Activated CD8-positive, alpha-beta T cell treated with anti-CD3 and anti-CD28 coated beads for 36 hours (primary cell): ENCODE measurements at regions of chr2 and their contacts with region 1.

Region 1: DNA sequence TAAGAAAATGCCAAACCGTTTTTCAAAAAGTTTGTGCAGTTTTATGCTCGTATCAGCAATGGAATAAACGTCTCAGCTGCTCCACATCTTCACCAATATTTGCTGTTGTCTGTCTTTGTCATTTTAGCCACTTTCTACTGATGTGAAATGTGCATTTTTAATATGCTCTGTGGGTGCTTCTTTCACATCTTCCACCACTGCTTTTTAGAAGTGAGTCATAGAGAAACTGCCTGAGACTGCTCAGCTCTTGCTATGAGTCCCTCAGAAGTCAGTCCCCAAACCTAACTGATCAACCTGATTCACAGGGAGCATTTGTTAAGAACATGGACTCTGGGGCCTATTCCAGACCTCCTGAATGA is 41.0 kb upstream of the EPC2 start:
- DNase-seq: peak; percentile 59
- ATAC-seq: peak; percentile 91
- H3K4me3 Mint-ChIP-seq: peak overlapping the region; percentile 42
- H3K27ac Mint-ChIP-seq: peak overlapping the region; percentile 96
- H3K4me1 Mint-ChIP-seq: peaks cover 17% of the 10 kb centered on the region
- H3K27me3 Mint-ChIP-seq: peaks cover 3% of the 10 kb centered on the region
- CTCF ChIP-seq: no peak

Region 2: GRCh38 chr2:147006736-147007141 is 1596.8 kb before region 1 on chr2:
- CTCF ChIA-PET with region 1: no interaction called
- POLR2A ChIA-PET with region 1: no interaction called
- intact Hi-C with region 1: no loop called
- DNase-seq: no peak
- ATAC-seq: no peak
- H3K4me3 Mint-ChIP-seq: no peak overlapping the region
- H3K27ac Mint-ChIP-seq: no peak overlapping the region
- H3K4me1 Mint-ChIP-seq: no peaks in the 10 kb centered on the region
- H3K27me3 Mint-ChIP-seq: no peaks in the 10 kb centered on the region
- CTCF ChIP-seq: no peak

Region 3: GRCh38 chr2:148130581-148130980 is 473.0 kb before region 1 on chr2:
- CTCF ChIA-PET with region 1: no interaction called
- POLR2A ChIA-PET with region 1: no interaction called
- intact Hi-C with region 1: no loop called
- DNase-seq: no peak
- ATAC-seq: no peak
- H3K4me3 Mint-ChIP-seq: no peak overlapping the region
- H3K27ac Mint-ChIP-seq: no peak overlapping the region
- H3K4me1 Mint-ChIP-seq: peaks cover 4% of the 10 kb centered on the region
- H3K27me3 Mint-ChIP-seq: no peaks in the 10 kb centered on the region
- CTCF ChIP-seq: no peak

Region 4: GRCh38 chr2:148627224-148627623 is 23.7 kb after region 1 on chr2:
- CTCF ChIA-PET with region 1: no interaction called
- POLR2A ChIA-PET with region 1: no interaction called
- intact Hi-C with region 1: no loop called
- DNase-seq: no peak
- ATAC-seq: no peak
- H3K4me3 Mint-ChIP-seq: no peak overlapping the region
- H3K27ac Mint-ChIP-seq: no peak overlapping the region
- H3K4me1 Mint-ChIP-seq: no peaks in the 10 kb centered on the region
- H3K27me3 Mint-ChIP-seq: no peaks in the 10 kb centered on the region
- CTCF ChIP-seq: no peak

Region 5: DNA sequence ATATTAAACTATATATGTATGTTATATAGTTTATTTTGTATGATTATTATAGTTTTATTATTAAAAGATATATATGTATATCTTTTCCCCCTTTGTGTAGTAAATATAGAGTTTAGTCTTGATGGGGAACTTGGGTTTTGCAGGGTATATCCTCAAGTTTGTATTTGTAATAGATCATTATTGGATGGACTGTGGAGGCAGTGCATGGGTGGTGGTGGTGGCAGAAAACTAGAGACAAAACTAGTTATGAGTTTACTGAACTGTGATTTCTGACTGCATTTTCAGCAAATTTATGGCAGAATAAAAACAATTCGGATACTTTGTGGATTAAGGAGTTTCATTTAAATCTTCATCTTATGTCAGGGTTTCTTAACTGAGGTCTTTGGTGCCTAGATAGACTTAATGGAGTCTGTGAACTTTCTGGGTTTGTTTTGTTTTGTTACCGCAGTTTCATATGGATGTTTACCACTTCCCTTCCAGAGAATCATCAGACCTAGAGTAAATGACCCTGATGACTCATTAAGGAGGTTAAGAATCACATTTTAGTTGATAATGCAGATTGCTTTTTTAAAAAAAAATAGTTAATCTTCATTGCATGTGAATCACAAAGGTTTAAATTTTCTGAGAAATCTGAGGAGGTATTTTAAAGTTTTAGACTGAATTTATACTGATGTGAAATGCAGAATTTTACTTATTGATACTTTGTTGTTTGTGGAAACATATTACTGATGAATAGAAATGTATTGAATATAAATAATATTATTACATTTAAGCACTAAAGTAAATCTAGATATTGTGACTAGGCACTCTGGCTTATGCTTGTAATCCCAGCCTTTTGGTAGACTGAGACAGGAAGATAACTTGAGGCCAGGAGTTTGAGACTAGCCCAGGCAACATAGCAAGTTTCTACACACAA is 55.5 kb after region 1 on chr2:
- CTCF ChIA-PET with region 1: no interaction called
- POLR2A ChIA-PET with region 1: no interaction called
- intact Hi-C with region 1: loop called (anchors 2 kb)
- DNase-seq: peak; percentile 23
- ATAC-seq: peak; percentile 77
- H3K4me3 Mint-ChIP-seq: peak overlapping the region; percentile 47
- H3K27ac Mint-ChIP-seq: peak overlapping the region; percentile 78
- H3K4me1 Mint-ChIP-seq: peaks cover 71% of the 10 kb centered on the region
- H3K27me3 Mint-ChIP-seq: no peaks in the 10 kb centered on the region
- CTCF ChIP-seq: no peak